Naive thymus-derived CD8-positive, alpha-beta T cell (primary cell): ENCODE measurements at regions of chr3 and their contacts with region 1.

Region 1: GRCh38 chr3:152193673-152194267 is 75.0 kb upstream of the MBNL1 start:
- DNase-seq: peak in 6 of 10 donors; percentile 10 to 57 (median 32)
- ATAC-seq: peak; percentile 61 to 65
- H3K4me3 Mint-ChIP-seq: peak overlapping the region; percentile 69 to 90 (median 85)
- H3K27ac Mint-ChIP-seq: peak overlapping the region; percentile 85 to 99 (median 93)
- H3K4me1 Mint-ChIP-seq: peaks cover 31 to 85% (median 75%) of the 10 kb centered on the region in 4 donors
- H3K27me3 Mint-ChIP-seq: no peaks in the 10 kb centered on the region

Region 2: GRCh38 chr3:152183473-152183872 is 10.3 kb before region 1 on chr3:
- POLR2A ChIA-PET with region 1: interaction called, 16 read pairs
- DNase-seq: peak; percentile 15 to 79 (median 58)
- ATAC-seq: peak; percentile 94
- H3K4me3 Mint-ChIP-seq: peak overlapping the region in 7 of 10 donors; percentile 9 to 70 (median 53)
- H3K27ac Mint-ChIP-seq: peak overlapping the region; percentile 38 to 89 (median 78)
- H3K4me1 Mint-ChIP-seq: peaks cover 24 to 57% (median 52%) of the 10 kb centered on the region in 4 donors
- H3K27me3 Mint-ChIP-seq: no peaks in the 10 kb centered on the region

Region 3: GRCh38 chr3:152205097-152205593 is 11.4 kb after region 1 on chr3:
- POLR2A ChIA-PET with region 1: interaction called, 20 read pairs
- DNase-seq: peak in 2 of 10 donors; percentile 42 to 44
- ATAC-seq: peak; percentile 62 to 66
- H3K4me3 Mint-ChIP-seq: peak overlapping the region; percentile 55 to 96 (median 90)
- H3K27ac Mint-ChIP-seq: peak overlapping the region; percentile 40 to 99 (median 94)
- H3K4me1 Mint-ChIP-seq: peaks cover 25 to 86% (median 66%) of the 10 kb centered on the region in 4 donors
- H3K27me3 Mint-ChIP-seq: no peaks in the 10 kb centered on the region

Region 4: DNA sequence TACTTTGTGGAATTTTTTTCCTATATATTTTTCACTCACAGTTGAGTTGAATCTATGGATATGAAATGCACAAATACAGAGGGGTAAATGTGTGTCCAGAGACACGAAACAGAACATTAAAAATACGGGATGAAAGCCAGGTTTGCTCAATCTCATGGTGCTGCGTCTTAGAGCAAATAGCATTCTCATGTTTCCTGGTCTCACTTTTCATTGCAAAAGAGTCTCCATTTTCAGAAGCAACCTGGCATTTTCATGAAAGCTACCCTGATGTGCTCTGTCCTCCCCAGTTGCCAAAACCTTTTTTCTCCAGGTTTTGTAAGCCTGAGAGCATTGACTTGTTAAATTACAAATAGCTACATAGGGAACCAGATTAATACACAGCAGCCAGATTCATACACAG is 25.4 kb after region 1 on chr3:
- POLR2A ChIA-PET with region 1: interaction called, 15 read pairs
- DNase-seq: no peak
- ATAC-seq: no peak
- H3K4me3 Mint-ChIP-seq: peak overlapping the region; percentile 34 to 89 (median 82)
- H3K27ac Mint-ChIP-seq: peak overlapping the region; percentile 57 to 97 (median 90)
- H3K4me1 Mint-ChIP-seq: peaks cover 28 to 68% (median 59%) of the 10 kb centered on the region in 4 donors
- H3K27me3 Mint-ChIP-seq: no peaks in the 10 kb centered on the region